Left cardiac atrium (tissue), 4 donors: ENCODE measurements at regions of chr3 and their contacts with region 1.

Region 1: GRCh38 chr3:128095222-128095703 is 28.3 kb downstream of the RUVBL1 start:
- DNase-seq: peak; percentile 86
- ATAC-seq: peak; percentile 97 to 98

Region 2: DNA sequence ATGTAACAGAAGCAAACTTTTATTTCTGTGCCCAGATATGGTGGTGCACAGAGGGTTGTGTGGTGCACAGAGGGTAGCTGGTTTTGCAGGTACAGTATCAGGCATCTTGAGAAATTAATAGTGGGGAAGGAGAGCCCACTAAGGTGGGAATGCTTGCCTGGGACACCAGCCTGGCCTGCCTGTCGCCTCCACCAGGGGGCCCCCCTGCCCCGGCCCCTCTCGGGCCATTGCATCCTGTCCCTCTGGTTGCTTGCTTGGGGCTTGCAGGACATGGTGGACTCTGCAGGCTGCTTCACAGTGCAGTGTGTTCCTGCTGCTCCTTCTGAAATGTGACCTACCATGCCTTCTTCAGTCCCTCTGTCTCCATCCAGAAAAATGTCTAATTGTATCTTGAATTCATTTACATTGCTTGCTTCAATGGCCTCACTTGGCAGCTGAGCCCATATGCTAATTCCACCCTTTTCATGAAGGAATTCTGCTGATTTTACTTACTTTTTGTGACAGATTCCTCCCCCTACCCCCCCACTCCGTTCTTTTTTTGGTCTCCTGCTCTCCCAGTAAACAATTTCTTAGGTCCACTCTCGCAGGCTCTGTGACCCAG is 131.6 kb after region 1 on chr3:
- intact Hi-C with region 1: no loop called
- DNase-seq: no peak
- ATAC-seq: peak; percentile 60 to 70

Region 3: GRCh38 chr3:128603811-128604775 is 508.8 kb after region 1 on chr3:
- intact Hi-C with region 1: loop called in 1 of 2 experiments (anchors 10 kb)
- DNase-seq: no peak
- ATAC-seq: no peak